ENCODE measurements at regions of chr12 and their contacts with region 1.

Region 1: GRCh38 chr12:132560614-132561426 is 49.6 kb downstream of the LRCOL1 start:
- DNase-seq: peak; percentile 52
- H3K4me3 ChIP-seq: peak overlapping the region; percentile 42 to 66 (median 63)
- H3K27ac ChIP-seq: no peak overlapping the region
- H3K4me1 ChIP-seq: peaks cover 12% of the 10 kb centered on the region
- H3K27me3 ChIP-seq: no peaks in the 10 kb centered on the region
- CTCF ChIP-seq: peak; percentile 44 to 75

Region 2: GRCh38 chr12:131473741-131474709 is 1086.8 kb before region 1 on chr12:
- CTCF ChIA-PET with region 1: no interaction called
- dilution Hi-C with region 1: no loop called
- in situ Hi-C with region 1: no loop called
- intact Hi-C with region 1: no loop called
- DNase-seq: no peak
- H3K4me3 ChIP-seq: no peak overlapping the region
- H3K27ac ChIP-seq: no peak overlapping the region
- H3K4me1 ChIP-seq: no peaks in the 10 kb centered on the region
- H3K27me3 ChIP-seq: no peaks in the 10 kb centered on the region
- CTCF ChIP-seq: no peak

Region 3: GRCh38 chr12:131959641-131960589 is 600.9 kb before region 1 on chr12:
- CTCF ChIA-PET with region 1: no interaction called
- dilution Hi-C with region 1: no loop called
- in situ Hi-C with region 1: no loop called
- intact Hi-C with region 1: no loop called
- DNase-seq: no peak
- H3K4me3 ChIP-seq: no peak overlapping the region
- H3K27ac ChIP-seq: no peak overlapping the region
- H3K4me1 ChIP-seq: peaks cover 12% of the 10 kb centered on the region
- H3K27me3 ChIP-seq: no peaks in the 10 kb centered on the region
- CTCF ChIP-seq: no peak

Region 4: GRCh38 chr12:132066345-132066685 is 494.5 kb before region 1 on chr12:
- CTCF ChIA-PET with region 1: no interaction called
- dilution Hi-C with region 1: no loop called
- in situ Hi-C with region 1: no loop called
- intact Hi-C with region 1: no loop called
- DNase-seq: no peak
- H3K4me3 ChIP-seq: no peak overlapping the region
- H3K27ac ChIP-seq: no peak overlapping the region
- H3K4me1 ChIP-seq: no peaks in the 10 kb centered on the region
- H3K27me3 ChIP-seq: no peaks in the 10 kb centered on the region
- CTCF ChIP-seq: no peak

Region 5: GRCh38 chr12:132153501-132154340 is 407.1 kb before region 1 on chr12:
- CTCF ChIA-PET with region 1: no interaction called
- dilution Hi-C with region 1: no loop called
- in situ Hi-C with region 1: no loop called
- intact Hi-C with region 1: loop called (anchors 2 kb)
- DNase-seq: peak; percentile 39
- H3K4me3 ChIP-seq: no peak overlapping the region
- H3K27ac ChIP-seq: no peak overlapping the region
- H3K4me1 ChIP-seq: peaks cover under 1% of the 10 kb centered on the region
- H3K27me3 ChIP-seq: no peaks in the 10 kb centered on the region
- CTCF ChIP-seq: peak; percentile 85 to 98

Region 6: DNA sequence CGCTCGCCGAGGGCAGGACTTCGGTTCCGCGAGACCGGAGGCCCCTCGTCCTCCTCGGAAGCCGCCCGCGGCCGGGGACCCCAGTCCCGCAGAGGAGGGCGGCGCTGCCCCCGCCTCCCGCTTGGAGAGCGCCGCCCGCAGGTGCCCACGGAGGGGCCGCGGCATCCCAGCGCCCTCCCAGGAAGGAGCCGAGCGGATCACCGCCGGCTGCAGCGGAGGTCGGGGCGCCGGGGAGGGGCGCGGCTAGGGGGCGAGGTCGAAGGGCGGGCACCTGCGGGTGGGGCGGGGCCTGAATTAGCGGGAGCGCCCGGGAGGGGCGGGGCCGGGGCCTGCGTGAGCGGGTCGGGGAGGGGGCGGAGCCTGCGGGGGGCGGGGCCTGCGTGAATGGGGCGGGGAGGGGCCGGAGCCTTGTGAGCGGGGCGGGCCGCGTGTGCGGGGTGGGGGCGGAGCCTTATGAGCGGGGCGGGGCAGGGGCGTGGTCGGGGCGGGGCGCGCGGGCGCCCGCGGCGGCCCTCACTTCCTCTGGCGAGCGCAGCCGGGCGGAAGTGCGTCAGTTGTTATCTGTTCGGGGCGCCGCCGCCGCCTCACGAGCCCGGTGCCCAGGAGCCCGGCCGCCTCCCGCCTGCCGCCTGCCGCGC is 71.1 kb before region 1 on chr12 and contains the start of gene FBRSL1:
- CTCF ChIA-PET with region 1: no interaction called
- dilution Hi-C with region 1: no loop called
- in situ Hi-C with region 1: no loop called
- intact Hi-C with region 1: loop called (anchors 5 kb)
- DNase-seq: peak; percentile 66
- H3K4me3 ChIP-seq: peak within 1 kb of the TSS; percentile 47 to 68 (median 64)
- H3K27ac ChIP-seq: no peak within 1 kb of the TSS
- H3K4me1 ChIP-seq: peaks cover 42% of the 10 kb centered on the region
- H3K27me3 ChIP-seq: no peaks in the 10 kb centered on the region
- CTCF ChIP-seq: peak in 1 of 2 donors; percentile 4
- total RNA-seq, gene FBRSL1: 28.8 to 58.6 TPM

Region 7: DNA sequence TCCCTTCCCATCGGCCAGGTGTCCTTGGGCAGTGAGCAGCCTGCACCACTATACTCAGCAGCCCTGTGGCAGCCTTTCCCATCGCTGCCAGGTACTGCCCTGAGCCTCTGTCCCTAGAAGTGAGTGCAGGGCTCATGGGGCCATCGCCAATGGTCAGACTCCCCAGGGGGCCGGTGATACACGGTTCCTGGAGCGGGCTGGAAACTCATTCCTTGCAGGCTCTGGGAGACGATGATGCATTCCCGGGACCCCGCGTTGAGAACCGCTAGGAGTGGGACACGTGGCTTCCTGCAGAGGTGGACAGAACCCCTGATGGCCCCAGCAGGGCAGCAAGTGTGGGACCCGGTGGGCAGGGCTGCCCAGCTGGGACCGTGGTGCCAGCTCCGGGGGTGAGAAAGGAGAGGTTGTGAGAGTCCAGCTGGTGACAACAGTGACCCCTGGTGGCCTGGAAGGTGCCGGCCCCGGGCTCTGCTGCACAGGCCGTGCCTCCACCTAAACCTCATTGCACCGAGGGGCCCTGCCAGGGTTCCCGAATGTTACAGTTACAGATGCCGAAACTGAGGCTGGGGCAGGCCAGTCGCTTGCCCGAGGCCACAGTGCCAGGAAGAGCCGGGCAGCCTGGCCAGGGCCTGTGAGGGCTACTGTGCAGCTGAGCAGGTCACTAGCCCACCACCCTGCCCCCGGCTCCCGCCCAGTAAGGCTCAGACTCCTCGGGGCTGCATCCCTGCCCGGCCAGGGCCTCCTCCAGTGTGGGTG is 37.1 kb before region 1 on chr12:
- CTCF ChIA-PET with region 1: interaction called, 6 read pairs
- dilution Hi-C with region 1: no loop called
- in situ Hi-C with region 1: no loop called
- intact Hi-C with region 1: loop called (anchors 1 kb)
- DNase-seq: peak; percentile 14
- H3K4me3 ChIP-seq: no peak overlapping the region
- H3K27ac ChIP-seq: no peak overlapping the region
- H3K4me1 ChIP-seq: peaks cover 23% of the 10 kb centered on the region
- H3K27me3 ChIP-seq: no peaks in the 10 kb centered on the region
- CTCF ChIP-seq: peak; percentile 50 to 66

Region 8: GRCh38 chr12:132600048-132601032 is 39.5 kb after region 1 on chr12:
- CTCF ChIA-PET with region 1: no interaction called
- dilution Hi-C with region 1: loop called (anchors 5 kb)
- in situ Hi-C with region 1: no loop called
- intact Hi-C with region 1: no loop called
- DNase-seq: peak; percentile 53
- H3K4me3 ChIP-seq: peak overlapping the region; percentile 49 to 52 (median 50)
- H3K27ac ChIP-seq: no peak overlapping the region
- H3K4me1 ChIP-seq: peaks cover 9% of the 10 kb centered on the region
- H3K27me3 ChIP-seq: peaks cover 20% of the 10 kb centered on the region
- CTCF ChIP-seq: peak; percentile 47 to 80